GM10248 (cell line): ENCODE measurements at regions of chr13 and their contacts with region 1.

Region 1: DNA sequence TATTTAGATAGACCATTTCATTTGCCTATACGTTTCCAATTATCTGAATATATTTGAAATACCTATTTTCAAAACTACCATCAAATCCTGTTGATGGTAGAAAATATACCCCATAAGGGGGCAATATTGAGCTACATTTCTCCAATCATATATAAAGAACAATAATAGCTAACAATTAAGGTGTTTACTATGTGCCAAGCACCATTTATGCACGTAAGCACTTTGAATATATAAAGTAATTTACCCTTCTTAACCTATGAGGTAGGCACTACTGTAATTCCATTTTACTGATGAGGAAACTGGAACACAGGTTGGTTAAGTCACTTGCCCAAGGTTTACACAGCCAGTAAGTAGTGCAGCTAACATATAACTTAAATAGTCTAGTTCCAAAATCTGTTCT is 79.2 kb downstream of the UBL3 start:
- DNase-seq: no peak
- CTCF ChIP-seq: peak; percentile 52

Region 2: GRCh38 chr13:29758531-29759114 is 12.6 kb before region 1 on chr13:
- CTCF ChIA-PET with region 1: interaction called, 42 read pairs
- POLR2A ChIA-PET with region 1: no interaction called
- DNase-seq: peak; percentile 69
- CTCF ChIP-seq: no peak

Region 3: DNA sequence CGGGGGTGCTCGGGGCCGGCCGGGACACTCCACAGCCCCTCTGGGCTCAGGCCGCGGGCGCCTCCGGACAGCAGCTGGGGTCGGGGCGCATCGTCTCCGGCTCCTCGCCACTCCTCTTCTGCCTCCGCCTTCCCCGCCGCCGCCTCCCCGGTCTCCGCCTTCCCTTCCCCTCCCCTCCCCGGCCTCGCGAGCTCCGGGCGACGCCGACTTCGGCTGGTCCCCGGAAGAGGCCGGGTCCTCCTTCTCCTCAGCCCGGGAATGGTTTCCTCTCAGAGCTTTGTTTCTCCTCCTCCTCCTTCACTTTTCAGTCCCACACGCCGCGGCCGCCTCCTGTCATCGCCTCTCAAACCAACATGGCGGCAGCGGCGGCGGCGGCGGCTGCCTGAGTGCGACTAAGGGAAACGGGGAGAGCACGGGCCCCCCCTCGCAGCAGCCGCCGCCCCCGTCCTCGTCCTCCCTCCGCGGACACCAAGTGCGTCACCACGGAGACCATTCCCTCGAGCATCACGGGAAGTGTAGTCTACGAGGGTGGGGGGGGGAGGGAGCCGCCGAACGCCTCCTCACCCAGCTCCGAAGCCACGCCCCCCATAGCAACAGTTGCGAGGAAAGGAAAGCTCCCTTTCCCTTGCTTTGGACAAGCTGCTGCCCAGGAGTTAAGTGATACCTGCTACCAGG is 79.1 kb after region 1 on chr13 and contains the start of gene UBL3:
- CTCF ChIA-PET with region 1: interaction called, 11 read pairs
- POLR2A ChIA-PET with region 1: no interaction called
- DNase-seq: peak; percentile 97
- CTCF ChIP-seq: no peak

Region 4: GRCh38 chr13:29991343-29991742 is 220.1 kb after region 1 on chr13:
- CTCF ChIA-PET with region 1: no interaction called
- POLR2A ChIA-PET with region 1: no interaction called
- DNase-seq: no peak
- CTCF ChIP-seq: no peak